A549 (cell line): ENCODE measurements at regions of chr7 and their contacts with region 1.

Region 1: GRCh38 chr7:54773472-54774399 is 14.7 kb upstream of the SEC61G start:
- DNase-seq: peak; percentile 69 to 93
- ATAC-seq: peak; percentile 96 to 98
- H3K4me3 ChIP-seq: peak overlapping the region; percentile 48
- H3K27ac ChIP-seq: peak overlapping the region; percentile 74 to 81
- H3K4me1 ChIP-seq: peaks cover 14% of the 10 kb centered on the region
- CTCF ChIP-seq: peak; percentile 93
- EP300 ChIP-seq: no peak
- POLR2A ChIP-seq: no peak
- RAD21 ChIP-seq: peak; percentile 94 to 99

Region 2: GRCh38 chr7:54596747-54597146 is 177.0 kb before region 1 on chr7:
- CTCF ChIA-PET with region 1: no interaction called
- POLR2A ChIA-PET with region 1: no interaction called
- DNase-seq: no peak
- ATAC-seq: no peak
- H3K4me3 ChIP-seq: no peak overlapping the region
- H3K27ac ChIP-seq: no peak overlapping the region
- H3K4me1 ChIP-seq: no peaks in the 10 kb centered on the region
- CTCF ChIP-seq: no peak
- EP300 ChIP-seq: no peak
- POLR2A ChIP-seq: no peak
- RAD21 ChIP-seq: no peak

Region 3: GRCh38 chr7:54831644-54832099 is 57.9 kb after region 1 on chr7:
- CTCF ChIA-PET with region 1: interaction called, 16 read pairs
- POLR2A ChIA-PET with region 1: no interaction called
- DNase-seq: peak in 1 of 2 experiments; percentile 63
- ATAC-seq: peak; percentile 69 to 81
- H3K4me3 ChIP-seq: peak overlapping the region; percentile 24; the same call in 2 of the 3 replicates
- H3K27ac ChIP-seq: peak overlapping the region; percentile 82 to 88
- H3K4me1 ChIP-seq: peaks cover 30% of the 10 kb centered on the region
- CTCF ChIP-seq: no peak
- EP300 ChIP-seq: peak; percentile 65 to 81; a peak in 2 of 5 replicates
- POLR2A ChIP-seq: no peak
- RAD21 ChIP-seq: 0 out of 5 replicates have a peak, but pooled peaks of 1 of the 2 experiments have one; percentile 8

Region 4: GRCh38 chr7:54921116-54921515 is 147.4 kb after region 1 on chr7:
- CTCF ChIA-PET with region 1: no interaction called
- POLR2A ChIA-PET with region 1: no interaction called
- DNase-seq: no peak
- ATAC-seq: no peak
- H3K4me3 ChIP-seq: no peak overlapping the region
- H3K27ac ChIP-seq: no peak overlapping the region
- H3K4me1 ChIP-seq: no peaks in the 10 kb centered on the region
- CTCF ChIP-seq: no peak
- EP300 ChIP-seq: no peak
- POLR2A ChIP-seq: no peak
- RAD21 ChIP-seq: no peak

Region 5: GRCh38 chr7:55026866-55027490 is 253.2 kb after region 1 on chr7:
- CTCF ChIA-PET with region 1: interaction called, 10 read pairs
- POLR2A ChIA-PET with region 1: no interaction called
- DNase-seq: no peak
- ATAC-seq: peak; percentile 28 to 44; a peak in 3 of 6 replicates
- H3K4me3 ChIP-seq: no peak overlapping the region
- H3K27ac ChIP-seq: peak overlapping the region; percentile 29 to 72; a peak in 4 of 6 replicates
- H3K4me1 ChIP-seq: peaks cover 100% of the 10 kb centered on the region
- CTCF ChIP-seq: no peak
- EP300 ChIP-seq: no peak
- POLR2A ChIP-seq: no peak
- RAD21 ChIP-seq: no peak

Region 6: DNA sequence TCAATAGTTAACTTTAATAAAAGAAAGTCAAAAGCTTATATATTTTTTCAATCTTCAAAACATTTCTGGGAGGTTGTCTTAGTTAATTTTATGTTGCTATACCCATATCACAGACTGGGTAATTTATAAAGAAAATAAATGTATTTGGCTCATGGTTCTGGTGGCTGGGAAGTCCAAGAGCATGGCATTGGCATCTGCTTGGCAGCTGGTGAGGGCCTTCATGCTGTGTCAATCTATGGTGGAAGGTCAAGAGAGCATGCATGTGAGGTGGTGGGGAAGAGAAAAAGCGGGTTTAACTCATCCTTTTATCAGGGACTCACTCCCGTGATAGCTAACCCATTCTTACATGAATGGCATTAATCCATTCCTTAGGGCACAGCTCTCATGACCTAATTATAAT is 364.9 kb after region 1 on chr7:
- CTCF ChIA-PET with region 1: interaction called, 12 read pairs
- POLR2A ChIA-PET with region 1: no interaction called
- DNase-seq: no peak
- ATAC-seq: no peak
- H3K4me3 ChIP-seq: no peak overlapping the region
- H3K27ac ChIP-seq: no peak overlapping the region
- H3K4me1 ChIP-seq: peaks cover 29% of the 10 kb centered on the region
- CTCF ChIP-seq: no peak
- EP300 ChIP-seq: no peak
- POLR2A ChIP-seq: no peak
- RAD21 ChIP-seq: no peak

Region 7: DNA sequence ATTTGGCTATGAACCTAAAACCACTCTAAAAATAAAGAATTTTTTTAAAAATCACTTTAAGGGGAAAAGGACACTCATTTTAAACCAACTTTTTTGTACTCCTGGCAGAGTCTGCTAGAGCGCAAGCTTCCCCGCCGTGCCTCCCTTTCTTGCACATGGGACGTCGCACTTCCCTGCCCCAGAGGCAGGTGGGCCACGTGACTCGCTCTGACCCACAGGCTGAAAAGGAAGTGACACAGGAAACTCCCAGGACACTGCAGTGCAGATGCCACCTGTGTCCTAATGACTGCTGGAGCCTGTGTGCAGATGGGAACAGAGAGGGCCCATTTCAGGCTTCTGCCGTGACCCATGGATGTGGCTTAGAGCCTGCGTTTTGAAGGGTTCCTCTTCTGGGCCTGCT is 449.3 kb after region 1 on chr7:
- CTCF ChIA-PET with region 1: interaction called, 11 read pairs
- POLR2A ChIA-PET with region 1: no interaction called
- DNase-seq: no peak
- ATAC-seq: peak; percentile 32 to 46; a peak in 3 of 6 replicates
- H3K4me3 ChIP-seq: no peak overlapping the region
- H3K27ac ChIP-seq: no peak overlapping the region
- H3K4me1 ChIP-seq: no peaks in the 10 kb centered on the region
- CTCF ChIP-seq: no peak
- EP300 ChIP-seq: no peak
- POLR2A ChIP-seq: no peak
- RAD21 ChIP-seq: no peak

Region 8: GRCh38 chr7:55415173-55415778 is 641.5 kb after region 1 on chr7:
- CTCF ChIA-PET with region 1: interaction called, 14 read pairs
- POLR2A ChIA-PET with region 1: no interaction called
- DNase-seq: peak; percentile 75 to 81
- ATAC-seq: peak; percentile 96 to 99
- H3K4me3 ChIP-seq: no peak overlapping the region
- H3K27ac ChIP-seq: no peak overlapping the region
- H3K4me1 ChIP-seq: no peaks in the 10 kb centered on the region
- CTCF ChIP-seq: peak; percentile 85
- EP300 ChIP-seq: no peak
- POLR2A ChIP-seq: no peak
- RAD21 ChIP-seq: peak; percentile 63 to 67